Activated CD4-positive, alpha-beta T cell treated with anti-CD3 and anti-CD28 coated beads for 36 hours (primary cell): ENCODE measurements at regions of chr3 and their contacts with region 1.

Region 1: DNA sequence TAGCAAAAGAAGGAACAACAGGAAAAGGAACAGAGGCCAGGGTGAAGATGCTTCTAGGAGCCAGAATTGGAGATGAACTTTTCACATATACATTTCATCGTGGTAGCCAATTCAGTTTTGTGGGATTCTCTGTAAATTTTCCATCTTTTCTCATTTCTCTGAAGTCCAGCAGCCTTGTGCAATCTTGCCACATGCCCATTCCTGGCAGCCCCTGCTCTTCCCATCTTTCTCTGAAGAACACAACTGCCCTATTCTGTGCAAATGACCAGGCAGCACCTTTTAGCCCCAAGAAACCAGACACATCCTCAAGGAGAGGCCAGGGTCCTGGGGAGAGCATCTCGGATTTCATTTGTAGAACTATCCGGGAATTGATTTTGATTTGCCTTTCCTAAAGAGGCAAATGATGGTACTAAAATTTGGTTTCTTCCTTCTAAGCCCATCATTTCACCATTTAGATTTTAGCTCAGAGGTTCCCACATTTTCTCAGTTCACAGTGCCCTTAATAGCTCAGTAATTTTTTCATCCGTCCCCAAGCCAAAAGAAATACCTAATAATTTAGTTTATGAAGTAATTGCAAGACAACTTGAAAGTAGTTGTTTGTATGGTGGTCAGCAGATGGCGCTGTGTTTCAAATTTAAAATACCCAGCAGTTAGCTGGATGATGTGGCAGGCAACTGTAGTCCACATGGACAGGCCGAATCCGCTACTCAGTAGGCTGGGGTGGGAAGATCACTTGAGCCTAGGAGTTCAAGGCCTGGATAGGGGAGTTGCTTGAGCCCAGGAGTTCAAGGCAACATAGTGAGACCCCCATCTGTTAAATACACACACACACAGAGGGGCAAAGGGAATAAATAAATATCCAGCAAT is 61.3 kb upstream of the ACKR4 start:
- DNase-seq: peak; percentile 74
- ATAC-seq: peak; percentile 54
- H3K4me3 Mint-ChIP-seq: no peak overlapping the region
- H3K27ac Mint-ChIP-seq: no peak overlapping the region
- H3K4me1 Mint-ChIP-seq: peaks cover 9% of the 10 kb centered on the region
- H3K27me3 Mint-ChIP-seq: no peaks in the 10 kb centered on the region

Region 2: DNA sequence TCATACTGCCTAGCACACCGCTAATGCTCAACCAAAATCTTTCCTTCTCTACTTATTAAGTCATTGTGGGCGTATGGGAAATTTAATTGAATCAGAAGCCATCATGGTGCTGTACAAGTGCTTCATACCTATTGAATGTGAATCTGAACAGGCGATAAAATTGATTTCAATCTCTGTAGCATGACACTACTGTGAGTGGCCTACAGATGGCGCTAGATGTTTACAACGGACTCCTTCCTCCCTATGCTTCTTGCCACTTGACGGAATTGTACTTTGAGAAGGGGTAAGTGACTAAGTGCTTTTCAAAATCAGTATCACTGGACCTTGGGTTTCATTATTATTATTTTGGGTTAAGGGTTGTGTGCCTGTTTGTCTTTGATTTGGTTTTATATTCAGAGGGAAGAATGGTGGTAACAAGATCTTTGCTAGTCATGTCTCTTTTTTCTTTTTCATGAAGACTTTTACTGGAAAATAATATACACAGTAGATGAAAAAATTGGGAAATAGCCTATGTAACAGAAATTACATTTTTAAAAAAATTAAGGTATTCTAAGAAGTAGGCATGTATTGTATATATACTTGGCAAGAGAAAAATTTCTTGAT is 183.2 kb before region 1 on chr3:
- CTCF ChIA-PET with region 1: interaction called, 3 read pairs
- POLR2A ChIA-PET with region 1: no interaction called
- intact Hi-C with region 1: loop called in 1 of 2 experiments (anchors 5 kb)
- DNase-seq: peak; percentile 81
- ATAC-seq: peak; percentile 92
- H3K4me3 Mint-ChIP-seq: no peak overlapping the region
- H3K27ac Mint-ChIP-seq: no peak overlapping the region
- H3K4me1 Mint-ChIP-seq: peaks cover 8% of the 10 kb centered on the region
- H3K27me3 Mint-ChIP-seq: peaks cover 3% of the 10 kb centered on the region

Region 3: DNA sequence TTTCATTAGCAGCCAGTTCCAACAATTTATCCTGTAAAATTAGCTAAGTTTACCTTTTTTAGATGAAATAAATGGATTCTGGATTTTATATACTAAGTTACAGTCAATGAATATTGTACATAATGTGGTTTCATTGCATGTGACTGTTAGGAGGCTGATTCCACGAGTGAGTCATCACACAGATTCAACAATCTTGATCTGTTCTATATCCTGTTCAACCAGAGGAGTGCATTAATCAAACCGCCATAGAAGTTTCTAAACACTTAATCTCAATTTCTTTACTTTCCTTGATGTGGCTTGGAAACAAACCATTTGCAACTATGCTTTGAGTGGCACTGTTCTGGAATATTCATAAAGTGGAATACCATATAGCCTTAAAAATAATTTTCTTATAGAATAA is 103.2 kb before region 1 on chr3:
- CTCF ChIA-PET with region 1: no interaction called
- POLR2A ChIA-PET with region 1: no interaction called
- intact Hi-C with region 1: no loop called
- DNase-seq: no peak
- ATAC-seq: peak; percentile 82
- H3K4me3 Mint-ChIP-seq: no peak overlapping the region
- H3K27ac Mint-ChIP-seq: no peak overlapping the region
- H3K4me1 Mint-ChIP-seq: peaks cover 40% of the 10 kb centered on the region
- H3K27me3 Mint-ChIP-seq: no peaks in the 10 kb centered on the region

Region 4: DNA sequence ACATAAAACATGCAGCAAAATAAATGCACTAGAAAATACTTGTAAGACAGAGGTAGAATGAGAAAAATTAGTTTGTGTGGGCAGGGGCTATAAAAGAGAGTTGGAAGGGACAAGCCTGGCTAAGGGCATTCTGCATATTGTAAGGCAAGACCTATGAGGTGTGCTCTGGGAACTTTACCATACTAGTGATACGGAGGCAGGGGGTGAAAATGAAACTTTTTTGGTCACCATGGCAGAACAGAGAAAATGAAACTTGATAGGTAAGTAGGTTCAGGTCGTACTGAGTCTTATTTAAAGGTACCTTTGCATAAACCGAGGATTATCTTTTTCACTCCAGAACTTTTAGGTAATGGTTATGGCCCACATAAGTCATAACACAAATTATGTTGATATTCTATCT is 13.5 kb before region 1 on chr3:
- CTCF ChIA-PET with region 1: interaction called, 16 read pairs
- POLR2A ChIA-PET with region 1: no interaction called
- intact Hi-C with region 1: no loop called
- DNase-seq: no peak
- ATAC-seq: peak; percentile 71
- H3K4me3 Mint-ChIP-seq: no peak overlapping the region
- H3K27ac Mint-ChIP-seq: no peak overlapping the region
- H3K4me1 Mint-ChIP-seq: peaks cover 16% of the 10 kb centered on the region
- H3K27me3 Mint-ChIP-seq: no peaks in the 10 kb centered on the region

Region 5: GRCh38 chr3:132716372-132716771 is 180.6 kb after region 1 on chr3:
- CTCF ChIA-PET with region 1: interaction called, 3 read pairs
- POLR2A ChIA-PET with region 1: no interaction called
- intact Hi-C with region 1: loop called in 1 of 2 experiments (anchors 5 kb)
- DNase-seq: no peak
- ATAC-seq: no peak
- H3K4me3 Mint-ChIP-seq: no peak overlapping the region
- H3K27ac Mint-ChIP-seq: no peak overlapping the region
- H3K4me1 Mint-ChIP-seq: peaks cover 33% of the 10 kb centered on the region
- H3K27me3 Mint-ChIP-seq: no peaks in the 10 kb centered on the region